GM12878 (cell line): ENCODE measurements at regions of chr14 and their contacts with region 1.

Region 1: GRCh38 chr14:101761032-101761880 is at the start of gene PPP2R5C:
- DNase-seq: no peak
- ATAC-seq: peak; percentile 93
- H3K4me3 ChIP-seq: peak within 1 kb of the TSS; percentile 84
- H3K27ac ChIP-seq: 0 out of 2 replicates have a peak within 1 kb of the TSS, but pooled peaks have one; percentile 37
- H3K4me1 ChIP-seq: no peaks in the 10 kb centered on the region
- H3K27me3 ChIP-seq: no peaks in the 10 kb centered on the region; a peak in 2 of 4 replicates
- CTCF ChIP-seq: no peak
- EP300 ChIP-seq: no peak
- POLR2A ChIP-seq: peak; percentile 67; the same call in 1 of the 2 replicates
- RAD21 ChIP-seq: no peak
- polyA plus RNA-seq, gene PPP2R5C: 190 to 199 TPM

Region 2: DNA sequence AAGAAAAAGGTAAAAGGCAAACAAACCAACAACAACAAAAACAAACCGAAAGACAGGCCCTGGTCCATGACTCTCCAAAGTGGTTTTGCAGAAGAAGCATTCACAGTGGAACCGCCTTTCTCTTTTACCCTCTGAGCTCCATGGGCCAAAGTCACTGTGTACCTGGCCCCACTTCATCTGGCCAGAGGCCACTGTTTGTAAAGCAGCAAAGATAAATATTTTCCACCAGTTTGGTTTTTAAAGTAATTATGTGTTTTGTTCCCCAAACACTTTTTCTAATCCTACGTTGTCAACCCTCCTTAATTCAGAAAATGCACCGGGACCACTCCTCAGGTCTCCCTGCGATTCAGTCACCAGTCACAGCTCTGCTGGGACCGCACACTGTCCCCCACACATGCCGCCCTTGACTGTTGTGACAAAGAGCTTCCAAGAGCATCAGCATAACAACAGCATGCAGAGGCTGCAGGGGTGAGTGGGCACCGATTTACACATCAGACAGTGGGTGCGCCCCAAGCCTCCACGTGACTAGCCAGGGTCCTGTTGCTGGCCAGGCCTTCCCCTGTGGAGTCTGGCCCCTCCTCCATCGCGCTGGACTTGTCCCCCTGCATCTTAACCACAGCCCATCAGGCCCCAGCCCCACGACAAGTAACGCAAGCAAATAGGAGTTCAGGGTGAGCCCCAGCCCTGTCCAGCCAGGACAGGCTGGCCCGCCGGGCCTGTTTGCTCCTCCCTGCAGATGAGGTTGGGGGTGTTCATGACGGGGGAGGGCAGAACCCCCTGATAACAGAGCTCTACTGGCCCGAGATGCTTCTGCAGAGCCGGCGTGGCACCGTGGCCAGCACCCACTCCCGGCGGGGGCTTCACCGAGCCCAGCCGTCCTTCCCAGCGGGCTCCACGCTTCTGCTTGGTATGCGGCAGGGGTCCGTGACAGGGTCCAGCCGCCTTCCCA is 265.2 kb before region 1 on chr14:
- CTCF ChIA-PET with region 1: no interaction called
- POLR2A ChIA-PET with region 1: no interaction called
- RAD21 ChIA-PET with region 1: no interaction called
- SMC1A ChIA-PET with region 1: no interaction called
- in situ Hi-C with region 1: no loop called
- intact Hi-C with region 1: no loop called
- DNase-seq: no peak
- ATAC-seq: no peak
- H3K4me3 ChIP-seq: no peak overlapping the region
- H3K27ac ChIP-seq: no peak overlapping the region
- H3K4me1 ChIP-seq: no peaks in the 10 kb centered on the region
- H3K27me3 ChIP-seq: no peaks in the 10 kb centered on the region; a peak in 1 of 4 replicates
- CTCF ChIP-seq: no peak
- EP300 ChIP-seq: no peak
- POLR2A ChIP-seq: no peak
- RAD21 ChIP-seq: no peak

Region 3: DNA sequence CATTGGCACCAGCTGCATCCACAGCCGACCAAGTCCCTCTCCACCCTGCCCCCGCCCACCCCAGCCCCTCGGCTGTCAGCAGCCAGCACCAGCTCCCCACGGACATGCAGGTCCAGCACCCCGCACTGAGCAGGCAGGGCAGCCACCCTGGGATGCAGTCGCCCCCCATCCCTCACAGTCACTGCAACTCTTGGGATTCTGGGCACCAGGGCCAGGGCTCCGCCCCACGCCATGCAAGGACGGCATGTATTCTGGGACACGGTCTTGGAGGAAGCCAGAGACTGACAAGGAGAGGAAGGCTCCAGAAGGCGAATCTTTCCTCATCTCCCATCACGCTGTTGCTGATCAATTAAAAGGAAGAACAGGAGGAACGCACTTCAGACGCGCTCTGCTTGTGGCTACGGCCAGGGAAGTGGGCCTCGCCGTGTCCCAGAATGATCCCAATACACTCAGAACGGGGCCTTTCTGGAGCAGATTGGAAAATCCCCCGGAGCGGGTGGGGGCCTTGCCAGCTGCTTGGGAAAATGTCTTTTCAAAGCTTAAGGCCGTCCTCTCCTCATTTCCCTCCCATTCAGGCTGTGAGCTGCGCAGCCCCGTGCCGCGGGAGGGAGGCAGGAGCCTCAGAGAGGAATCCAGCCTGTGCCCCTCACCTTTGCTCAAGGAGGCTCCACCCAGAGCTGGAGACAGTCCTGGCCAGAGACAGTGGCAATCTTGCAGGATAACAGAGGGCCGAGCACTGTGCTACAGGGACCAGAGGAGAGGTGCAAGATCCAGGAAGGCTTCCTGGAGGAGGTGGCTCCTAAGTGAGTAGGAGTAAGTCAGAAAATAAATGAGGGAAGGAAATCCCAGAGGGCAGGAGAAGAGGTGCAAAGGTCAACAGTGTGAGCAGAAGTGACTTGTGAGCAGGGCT is 254.1 kb before region 1 on chr14:
- CTCF ChIA-PET with region 1: no interaction called
- POLR2A ChIA-PET with region 1: no interaction called
- RAD21 ChIA-PET with region 1: no interaction called
- SMC1A ChIA-PET with region 1: no interaction called
- in situ Hi-C with region 1: no loop called
- intact Hi-C with region 1: no loop called
- DNase-seq: no peak
- ATAC-seq: no peak
- H3K4me3 ChIP-seq: no peak overlapping the region
- H3K27ac ChIP-seq: no peak overlapping the region
- H3K4me1 ChIP-seq: no peaks in the 10 kb centered on the region
- H3K27me3 ChIP-seq: no peaks in the 10 kb centered on the region; a peak in 1 of 4 replicates
- CTCF ChIP-seq: no peak
- EP300 ChIP-seq: no peak
- POLR2A ChIP-seq: no peak
- RAD21 ChIP-seq: no peak

Region 4: GRCh38 chr14:101781240-101782061 is 20.2 kb after region 1 on chr14:
- CTCF ChIA-PET with region 1: no interaction called
- POLR2A ChIA-PET with region 1: no interaction called
- RAD21 ChIA-PET with region 1: no interaction called
- SMC1A ChIA-PET with region 1: no interaction called
- in situ Hi-C with region 1: no loop called
- intact Hi-C with region 1: no loop called
- DNase-seq: no peak
- ATAC-seq: peak; percentile 69
- H3K4me3 ChIP-seq: peak overlapping the region; percentile 50; the same call in 1 of the 2 replicates
- H3K27ac ChIP-seq: no peak overlapping the region
- H3K4me1 ChIP-seq: peaks cover 6% of the 10 kb centered on the region
- H3K27me3 ChIP-seq: peaks cover 4% of the 10 kb centered on the region in 2 experiments; a peak in 2 of 4 replicates
- CTCF ChIP-seq: no peak
- EP300 ChIP-seq: no peak
- POLR2A ChIP-seq: no peak
- RAD21 ChIP-seq: no peak

Region 5: DNA sequence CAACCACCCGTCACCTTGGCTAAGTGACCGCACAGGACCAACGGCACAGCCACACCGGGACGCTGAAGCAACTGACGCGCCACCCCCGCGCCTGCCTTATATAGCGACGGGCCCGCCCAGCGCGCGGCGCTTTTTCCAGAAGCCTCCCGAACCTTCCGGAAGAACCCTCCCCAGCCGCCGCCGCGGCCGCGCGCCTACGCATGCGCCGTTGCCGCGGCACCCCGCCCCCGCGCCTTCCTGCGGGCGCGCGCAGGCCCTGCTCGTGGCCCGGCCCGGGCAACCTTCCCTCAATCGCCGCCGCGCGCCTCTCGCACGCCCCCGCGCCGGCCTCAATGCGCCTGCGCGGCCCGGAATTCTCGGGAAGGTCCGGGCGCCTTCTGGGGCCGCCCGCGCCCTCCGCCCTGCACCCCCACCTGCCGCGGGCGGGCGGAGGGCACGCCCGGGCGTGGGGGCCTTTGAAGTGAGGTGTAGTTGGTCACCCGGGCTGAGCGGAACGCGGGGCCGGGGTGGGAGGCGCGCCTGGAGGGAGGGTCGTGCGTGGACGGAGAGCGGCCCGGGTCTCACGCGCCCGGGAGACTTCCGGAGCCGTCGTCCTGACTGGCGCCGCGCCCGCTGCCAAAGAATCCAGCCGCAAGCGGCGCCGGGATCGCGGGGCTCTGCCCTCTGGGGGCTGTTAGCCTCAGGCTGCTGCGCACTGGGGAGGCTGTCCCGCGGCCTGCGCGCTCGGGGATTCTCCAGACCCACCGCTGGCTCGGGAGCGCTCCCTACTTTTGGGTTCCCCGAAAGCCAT is 325.9 kb after region 1 on chr14 and contains the start of gene HSP90AA1:
- CTCF ChIA-PET with region 1: no interaction called
- POLR2A ChIA-PET with region 1: interaction called, 3 read pairs
- RAD21 ChIA-PET with region 1: no interaction called
- SMC1A ChIA-PET with region 1: no interaction called
- in situ Hi-C with region 1: no loop called
- intact Hi-C with region 1: loop called (anchors 5 kb)
- DNase-seq: peak; percentile 60
- ATAC-seq: peak; percentile 70
- H3K4me3 ChIP-seq: peak within 1 kb of the TSS; percentile 98
- H3K27ac ChIP-seq: peak within 1 kb of the TSS; percentile 95
- H3K4me1 ChIP-seq: peaks cover 9% of the 10 kb centered on the region
- H3K27me3 ChIP-seq: no peaks in the 10 kb centered on the region
- CTCF ChIP-seq: 0 out of 6 replicates have a peak, but pooled peaks of 1 of the 3 experiments have one; percentile 15
- EP300 ChIP-seq: peak in 1 of 2 experiments; percentile 97; a peak in 1 of 4 replicates
- POLR2A ChIP-seq: peak; percentile 96
- RAD21 ChIP-seq: no peak
- polyA plus RNA-seq, gene HSP90AA1: 555 to 817 TPM